Breast epithelium (tissue), 4 donors: ENCODE measurements at regions of chr17 and their contacts with region 1.

Region 1: DNA sequence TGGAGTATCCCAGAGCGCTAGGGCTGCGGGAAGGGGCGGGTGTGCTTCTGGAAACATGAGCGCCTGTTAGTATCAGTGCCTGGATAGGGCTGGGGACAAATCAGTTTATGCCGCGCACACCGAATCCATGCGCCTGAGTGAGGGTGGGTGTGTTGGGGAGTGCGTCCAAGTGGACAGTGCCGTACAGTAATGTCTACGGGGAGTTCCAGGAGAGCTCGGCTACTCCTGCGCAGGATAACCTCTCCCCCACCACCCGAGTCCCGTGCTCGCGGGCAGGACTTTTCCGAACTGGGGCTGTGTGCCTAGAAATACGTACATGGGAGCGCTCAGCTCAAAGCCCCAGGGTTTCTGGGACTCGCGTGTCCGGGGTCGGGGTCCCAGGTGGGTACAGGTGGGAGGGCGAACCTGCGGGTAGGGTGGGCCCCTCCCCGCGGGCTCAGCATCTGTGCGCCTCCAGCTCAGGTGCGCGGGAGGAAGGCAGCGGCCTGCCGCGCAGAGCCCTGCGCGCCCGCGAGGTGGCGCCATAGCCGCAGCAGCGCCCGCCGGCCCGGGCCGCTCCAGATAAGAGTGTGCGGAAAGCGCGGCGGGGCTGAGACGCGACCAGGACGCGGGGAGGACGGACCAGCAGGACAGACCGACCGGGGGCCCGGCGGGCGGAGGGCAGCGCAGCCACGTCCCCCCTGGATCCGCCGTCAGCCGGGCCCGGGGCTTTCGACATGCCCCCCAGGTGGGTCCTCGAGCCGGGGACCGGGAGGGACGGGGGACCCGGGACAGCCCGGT is at the start of gene HIC1:
- DNase-seq: peak; percentile 64 to 74
- H3K4me3 ChIP-seq: peak within 1 kb of the TSS; percentile 61 to 84 (median 70)
- H3K27ac ChIP-seq: peak within 1 kb of the TSS; percentile 85 to 89
- H3K4me1 ChIP-seq: peaks cover 10 to 11% of the 10 kb centered on the region in 2 donors
- H3K27me3 ChIP-seq: no peaks in the 10 kb centered on the region
- CTCF ChIP-seq: peak; percentile 41 to 97 (median 88)
- POLR2A ChIP-seq: peak; percentile 21
- total RNA-seq, gene HIC1: 12.6 to 16.4 (median 12.7) TPM

Region 2: DNA sequence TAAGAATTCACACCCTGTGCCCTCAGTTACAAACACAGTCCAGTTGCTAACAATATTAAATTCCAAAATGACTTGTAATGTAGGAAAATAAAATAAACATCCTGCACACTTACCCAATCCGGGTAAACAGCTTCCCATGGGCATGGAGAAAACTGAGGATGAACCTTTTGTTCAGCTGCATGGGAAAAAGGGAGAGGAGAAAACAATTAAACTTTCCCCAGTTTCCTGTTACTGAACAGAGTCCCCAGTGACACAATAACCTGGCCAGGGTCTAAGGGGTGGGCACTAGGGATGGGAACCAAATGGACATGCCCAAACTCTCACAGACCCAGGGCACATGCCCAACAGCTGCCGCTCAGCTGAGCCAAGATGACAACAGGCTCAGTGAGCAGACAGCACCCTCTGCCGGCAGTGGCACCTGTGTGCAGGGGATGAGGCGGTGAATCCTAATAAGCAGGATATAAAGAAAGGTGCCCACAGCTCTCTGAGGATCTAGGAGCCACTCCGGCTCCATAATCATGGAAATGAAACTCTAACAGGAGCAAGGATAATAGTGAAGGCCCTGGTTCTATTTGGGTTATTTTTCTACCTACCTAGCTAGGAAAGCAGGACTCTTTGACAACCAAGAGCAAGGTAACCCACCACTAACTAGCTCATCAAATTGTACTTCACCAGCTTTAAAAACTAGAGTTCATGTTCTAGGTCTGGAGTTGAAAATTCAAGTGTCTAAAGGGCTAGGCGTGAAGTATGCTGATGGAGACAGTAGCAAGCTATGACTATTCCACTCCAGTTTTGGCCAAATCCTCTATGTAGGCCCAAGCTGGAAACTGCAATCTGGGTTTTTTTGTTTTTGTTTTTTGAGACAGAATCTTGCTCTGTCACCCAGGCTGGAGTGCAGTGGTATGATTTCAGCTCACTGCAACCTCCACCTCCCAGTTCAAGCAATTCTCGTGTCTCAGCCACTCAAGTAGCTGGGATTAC is 190.1 kb after region 1 on chr17:
- intact Hi-C with region 1: loop called (anchors 5 kb)
- DNase-seq: peak; percentile 78 to 85
- H3K4me3 ChIP-seq: no peak overlapping the region
- H3K27ac ChIP-seq: peak overlapping the region; percentile 68 to 69
- H3K4me1 ChIP-seq: no peaks in the 10 kb centered on the region
- H3K27me3 ChIP-seq: no peaks in the 10 kb centered on the region
- CTCF ChIP-seq: peak; percentile 92 to 99 (median 98)
- POLR2A ChIP-seq: no peak